Activated T-helper 1 cell treated with anti-CD3 and anti-CD28 coated beads, Interleukin-12 subunit alpha, Interleukin-12 subunit beta, Interleukin-2, Interleukin-4 antibody, amounts not matched to agents 30 ng/mL and 10 ng/mL and 1 ng/mL, durations not matched to agents 14 hours and 24 hours and 36 hours (primary cell): ENCODE measurements at regions of chr22 and their contacts with region 1.

Region 1: DNA sequence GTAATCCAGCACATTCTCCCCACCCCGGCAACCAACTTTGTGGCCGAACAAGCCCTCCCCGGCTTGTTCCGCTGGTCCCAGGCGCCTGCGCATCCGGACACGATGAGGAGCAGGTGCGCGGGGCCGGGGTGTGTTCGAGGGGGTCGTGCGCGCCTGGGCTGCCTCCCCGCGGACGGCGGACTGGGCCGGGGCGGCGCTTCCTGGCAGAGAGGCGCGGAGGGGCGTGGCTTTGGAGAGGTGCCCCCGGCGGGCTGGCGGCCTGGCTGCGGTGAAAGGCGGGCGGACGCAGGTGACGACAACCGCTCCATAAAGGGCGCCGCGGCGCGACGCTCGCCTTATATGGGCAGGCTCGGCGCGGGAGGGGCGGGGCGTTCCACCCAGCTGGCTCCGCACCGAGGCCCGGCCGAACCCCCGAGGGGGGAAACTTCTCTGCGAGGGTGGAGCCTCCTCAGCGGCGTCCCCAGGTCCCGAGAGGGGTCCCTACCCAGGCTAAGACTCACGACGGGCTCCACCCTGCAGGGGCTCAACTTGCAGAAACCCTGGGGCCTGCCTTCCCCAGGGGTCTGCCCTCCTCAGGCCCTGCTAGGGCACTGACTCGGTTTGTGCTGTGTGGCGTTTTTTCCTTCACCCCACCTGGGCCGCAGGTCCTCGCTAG is 26.4 kb downstream of the TXN2 start:
- DNase-seq: peak; percentile 94
- H3K4me3 Mint-ChIP-seq: peak overlapping the region; percentile 72
- H3K27ac Mint-ChIP-seq: peak overlapping the region; percentile 34
- H3K4me1 Mint-ChIP-seq: peaks cover 39% of the 10 kb centered on the region
- H3K27me3 Mint-ChIP-seq: no peaks in the 10 kb centered on the region

Region 2: GRCh38 chr22:36136475-36136874 is 318.6 kb before region 1 on chr22:
- intact Hi-C with region 1: no loop called
- DNase-seq: no peak
- H3K4me3 Mint-ChIP-seq: no peak overlapping the region
- H3K27ac Mint-ChIP-seq: no peak overlapping the region
- H3K4me1 Mint-ChIP-seq: peaks cover 12% of the 10 kb centered on the region
- H3K27me3 Mint-ChIP-seq: peaks cover 3% of the 10 kb centered on the region

Region 3: GRCh38 chr22:36239401-36240171 is 215.5 kb before region 1 on chr22 and contains the start of gene APOL2:
- intact Hi-C with region 1: no loop called
- DNase-seq: peak; percentile 84
- H3K4me3 Mint-ChIP-seq: peak within 1 kb of the TSS; percentile 99
- H3K27ac Mint-ChIP-seq: peak within 1 kb of the TSS; percentile 97
- H3K4me1 Mint-ChIP-seq: peaks cover 54% of the 10 kb centered on the region
- H3K27me3 Mint-ChIP-seq: no peaks in the 10 kb centered on the region
- total RNA-seq, gene APOL2: 54.4 and 62.2 TPM in 2 replicates

Region 4: DNA sequence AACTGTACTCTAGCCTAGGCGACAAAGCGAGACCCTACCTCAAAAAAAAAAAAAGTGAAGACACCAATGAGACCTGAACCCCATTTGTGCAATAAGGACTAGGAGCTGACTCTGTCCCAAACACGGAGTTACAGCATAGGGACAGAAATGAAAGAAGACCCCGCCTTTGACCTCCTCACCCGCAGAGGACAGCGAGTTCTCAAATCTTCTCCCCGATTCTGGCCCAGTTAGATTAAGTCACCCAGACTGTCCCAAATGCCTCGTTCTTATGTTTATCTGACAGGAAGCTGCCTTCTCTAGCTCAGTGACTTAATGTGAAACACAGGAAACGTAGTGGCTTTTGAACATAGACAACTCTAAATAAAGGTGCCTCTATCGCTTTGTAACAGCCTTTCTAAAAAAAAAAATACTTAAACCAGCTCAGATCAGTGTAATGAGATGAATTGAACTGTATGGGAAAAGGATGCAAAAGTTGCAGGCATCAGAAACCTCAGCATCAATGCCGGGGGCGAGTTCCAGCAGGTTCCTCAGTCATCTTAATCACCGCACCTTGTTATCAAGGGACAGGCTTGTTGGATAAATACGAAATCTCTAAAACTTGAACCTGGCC is 77.9 kb before region 1 on chr22:
- intact Hi-C with region 1: loop called (anchors 1 kb)
- DNase-seq: peak; percentile 52
- H3K4me3 Mint-ChIP-seq: peak overlapping the region; percentile 87
- H3K27ac Mint-ChIP-seq: peak overlapping the region; percentile 99
- H3K4me1 Mint-ChIP-seq: peaks cover 91% of the 10 kb centered on the region
- H3K27me3 Mint-ChIP-seq: no peaks in the 10 kb centered on the region

Region 5: DNA sequence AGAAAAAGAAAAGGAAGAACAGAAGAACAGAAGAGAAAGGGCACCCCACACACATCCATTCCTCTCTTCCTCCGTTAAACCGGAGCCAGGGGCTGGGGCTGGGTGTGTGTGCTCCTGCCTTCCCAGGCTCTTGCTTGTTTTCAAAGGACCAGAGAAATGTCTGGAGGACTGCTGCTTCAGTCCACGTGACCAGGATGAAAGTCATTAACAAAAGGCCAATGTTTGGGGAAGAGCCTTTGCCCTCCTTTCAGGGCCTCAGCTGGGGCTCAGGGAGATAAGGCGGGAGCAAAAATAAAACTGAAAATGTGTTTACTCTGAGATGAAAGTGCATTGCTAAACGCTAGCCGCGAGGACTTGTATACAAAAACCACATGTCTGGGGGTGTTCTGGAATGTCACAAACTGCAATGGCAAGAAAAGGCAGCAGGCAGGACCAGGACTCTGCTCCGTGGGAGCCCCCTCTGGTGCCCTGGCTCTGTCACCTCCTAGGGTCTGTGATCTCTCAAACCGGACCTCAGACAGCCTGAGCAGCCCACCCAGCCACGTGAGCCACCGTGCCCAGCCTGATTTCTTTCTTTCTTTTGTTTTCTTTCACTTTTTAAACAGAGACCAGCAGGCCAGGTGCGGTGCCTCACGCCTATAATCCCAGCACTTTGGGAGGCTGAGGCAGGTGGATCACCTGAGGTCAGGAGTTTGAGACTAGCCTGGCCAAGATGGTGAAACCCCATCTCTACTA is 35.7 kb before region 1 on chr22:
- intact Hi-C with region 1: no loop called
- DNase-seq: no peak
- H3K4me3 Mint-ChIP-seq: peak overlapping the region; percentile 59
- H3K27ac Mint-ChIP-seq: peak overlapping the region; percentile 48
- H3K4me1 Mint-ChIP-seq: peaks cover 13% of the 10 kb centered on the region
- H3K27me3 Mint-ChIP-seq: no peaks in the 10 kb centered on the region

Region 6: DNA sequence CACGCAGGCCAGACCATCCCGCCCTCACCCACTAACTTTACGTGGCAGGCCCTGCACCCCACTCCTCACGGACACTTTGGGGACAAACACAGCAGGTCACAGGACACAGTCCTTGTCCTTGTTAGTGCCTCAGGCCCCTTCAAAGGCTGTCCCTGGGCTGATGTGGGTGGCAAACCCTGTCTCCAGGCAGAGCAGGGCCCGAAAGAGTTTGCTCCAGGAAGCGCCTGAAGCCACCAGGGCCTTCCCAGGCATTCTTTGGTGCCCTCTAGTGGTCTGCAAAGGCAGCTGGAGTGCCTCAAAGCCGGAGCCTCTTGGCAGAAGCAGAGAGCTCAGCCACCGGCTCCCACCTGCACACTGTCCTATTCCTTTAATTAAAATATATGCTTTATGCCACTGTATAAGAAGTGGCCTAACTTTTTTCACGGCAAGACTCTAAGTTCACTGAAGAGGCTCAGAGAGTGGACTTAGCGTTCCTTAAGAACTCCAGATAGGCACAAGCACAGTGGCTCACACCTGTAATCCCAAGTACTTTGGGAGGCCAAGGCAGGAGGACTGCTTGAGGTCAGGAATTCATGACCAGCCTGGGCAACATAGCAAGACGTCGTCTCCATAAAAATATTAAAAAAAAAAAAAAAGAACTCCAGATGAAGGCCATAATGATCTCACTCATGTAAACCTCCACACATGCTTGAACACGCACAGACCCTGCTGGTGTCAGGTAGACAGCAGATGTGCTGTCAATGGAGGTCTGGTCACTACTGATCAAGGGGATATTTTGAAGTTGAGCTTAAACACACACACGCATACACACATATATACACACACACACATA is 15.3 kb after region 1 on chr22:
- intact Hi-C with region 1: loop called (anchors 2 kb)
- DNase-seq: peak; percentile 79
- H3K4me3 Mint-ChIP-seq: no peak overlapping the region
- H3K27ac Mint-ChIP-seq: no peak overlapping the region
- H3K4me1 Mint-ChIP-seq: peaks cover 27% of the 10 kb centered on the region
- H3K27me3 Mint-ChIP-seq: no peaks in the 10 kb centered on the region

Region 7: GRCh38 chr22:36493690-36494110 is 38.7 kb after region 1 on chr22:
- intact Hi-C with region 1: no loop called
- DNase-seq: no peak
- H3K4me3 Mint-ChIP-seq: no peak overlapping the region
- H3K27ac Mint-ChIP-seq: peak overlapping the region; percentile 34
- H3K4me1 Mint-ChIP-seq: peaks cover 8% of the 10 kb centered on the region
- H3K27me3 Mint-ChIP-seq: no peaks in the 10 kb centered on the region

Region 8: GRCh38 chr22:36506637-36507517 is 51.8 kb after region 1 on chr22 and contains the start of gene FOXRED2:
- intact Hi-C with region 1: loop called (anchors 2 kb)
- DNase-seq: peak; percentile 92
- H3K4me3 Mint-ChIP-seq: peak within 1 kb of the TSS; percentile 74
- H3K27ac Mint-ChIP-seq: no peak within 1 kb of the TSS
- H3K4me1 Mint-ChIP-seq: peaks cover 19% of the 10 kb centered on the region
- H3K27me3 Mint-ChIP-seq: no peaks in the 10 kb centered on the region
- total RNA-seq, gene FOXRED2: 22.3 and 25.0 TPM in 2 replicates